ENCODE measurements at regions of chr7 and their contacts with region 1.

Region 1: GRCh38 chr7:138525757-138526156 is 65.7 kb downstream of the TRIM24 start:
- DNase-seq: no peak
- H3K4me3 ChIP-seq: no peak overlapping the region
- H3K27ac ChIP-seq: no peak overlapping the region
- H3K27me3 ChIP-seq: no peaks in the 10 kb centered on the region
- CTCF ChIP-seq: no peak

Region 2: GRCh38 chr7:138510003-138510402 is 15.8 kb before region 1 on chr7:
- intact Hi-C with region 1: loop called in 1 of 2 experiments (anchors 1 kb)
- DNase-seq: no peak
- H3K4me3 ChIP-seq: no peak overlapping the region
- H3K27ac ChIP-seq: peak overlapping the region in 1 of 59 donors; percentile 21
- H3K27me3 ChIP-seq: no peaks in the 10 kb centered on the region
- CTCF ChIP-seq: no peak

Region 3: DNA sequence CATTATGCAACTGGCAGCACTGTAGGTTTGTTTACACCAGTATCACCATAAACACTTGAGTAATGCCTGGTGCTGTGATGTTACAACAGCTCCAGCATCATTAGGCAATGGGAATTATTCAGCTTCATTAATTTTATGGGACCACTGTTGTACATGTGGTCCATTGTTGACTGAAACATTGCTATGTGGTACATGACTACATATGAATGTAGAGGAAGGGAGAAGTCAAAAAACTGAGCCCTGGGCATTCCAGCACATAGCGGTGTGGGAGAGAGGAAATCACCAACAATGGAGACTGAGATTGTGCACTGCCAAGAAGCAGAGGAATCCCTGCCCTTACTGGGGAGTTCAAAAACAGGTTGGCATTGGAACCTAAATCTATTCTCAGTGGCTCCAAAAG is 23.3 kb after region 1 on chr7:
- intact Hi-C with region 1: no loop called
- DNase-seq: no peak
- H3K4me3 ChIP-seq: no peak overlapping the region
- H3K27ac ChIP-seq: no peak overlapping the region
- H3K27me3 ChIP-seq: no peaks in the 10 kb centered on the region
- CTCF ChIP-seq: no peak

Measured in dorsolateral prefrontal cortex (tissue), 120 donors.